Naive thymus-derived CD4-positive, alpha-beta T cell (primary cell): ENCODE measurements at regions of chr10 and their contacts with region 1.

Region 1: GRCh38 chr10:103192451-103193106 is 493 bp downstream of the NT5C2 start:
- DNase-seq: peak; percentile 36 to 76 (median 63)
- ATAC-seq: peak; percentile 60
- H3K4me3 ChIP-seq: peak overlapping the region; percentile 85
- H3K4me3 Mint-ChIP-seq: peak overlapping the region; percentile 91 to 100 (median 98)
- H3K27ac ChIP-seq: peak overlapping the region; percentile 97
- H3K27ac Mint-ChIP-seq: peak overlapping the region; percentile 81 to 100 (median 95)
- H3K4me1 ChIP-seq: peaks cover 6 to 21% of the 10 kb centered on the region in 2 donors
- H3K4me1 Mint-ChIP-seq: peaks cover 36 to 48% (median 44%) of the 10 kb centered on the region in 7 donors
- H3K27me3 ChIP-seq: no peaks in the 10 kb centered on the region
- H3K27me3 Mint-ChIP-seq: no peaks in the 10 kb centered on the region

Region 2: GRCh38 chr10:102743588-102744373 is 448.8 kb before region 1 on chr10 and contains the start of gene WBP1L:
- CTCF ChIA-PET with region 1: no interaction called
- POLR2A ChIA-PET with region 1: no interaction called
- intact Hi-C with region 1: loop called in 1 of 2 experiments (anchors 2 kb)
- DNase-seq: peak; percentile 77 to 98 (median 96)
- ATAC-seq: peak; percentile 98
- H3K4me3 ChIP-seq: peak within 1 kb of the TSS; percentile 85
- H3K4me3 Mint-ChIP-seq: peak within 1 kb of the TSS; percentile 80 to 97 (median 93)
- H3K27ac ChIP-seq: peak within 1 kb of the TSS; percentile 77
- H3K27ac Mint-ChIP-seq: peak within 1 kb of the TSS; percentile 57 to 96 (median 90)
- H3K4me1 ChIP-seq: peaks cover 17 to 25% of the 10 kb centered on the region in 2 donors
- H3K4me1 Mint-ChIP-seq: peaks cover 33 to 59% (median 48%) of the 10 kb centered on the region in 7 donors
- H3K27me3 ChIP-seq: no peaks in the 10 kb centered on the region
- H3K27me3 Mint-ChIP-seq: no peaks in the 10 kb centered on the region
- total RNA-seq, gene WBP1L: 20.5 to 37.9 (median 34.1) TPM

Region 3: GRCh38 chr10:103053659-103054581 is 138.7 kb before region 1 on chr10:
- CTCF ChIA-PET with region 1: no interaction called
- POLR2A ChIA-PET with region 1: no interaction called
- intact Hi-C with region 1: loop called in 1 of 2 experiments (anchors 1 kb)
- DNase-seq: peak in 8 of 9 donors; percentile 42 to 74 (median 58)
- ATAC-seq: peak; percentile 93
- H3K4me3 ChIP-seq: peak overlapping the region; percentile 37
- H3K4me3 Mint-ChIP-seq: peak overlapping the region; percentile 74 to 88 (median 84)
- H3K27ac ChIP-seq: peak overlapping the region; percentile 46
- H3K27ac Mint-ChIP-seq: peak overlapping the region; percentile 85 to 96 (median 90)
- H3K4me1 ChIP-seq: peaks cover 6 to 15% of the 10 kb centered on the region in 2 donors
- H3K4me1 Mint-ChIP-seq: peaks cover 13 to 21% (median 18%) of the 10 kb centered on the region in 7 donors
- H3K27me3 ChIP-seq: no peaks in the 10 kb centered on the region
- H3K27me3 Mint-ChIP-seq: no peaks in the 10 kb centered on the region

Region 4: DNA sequence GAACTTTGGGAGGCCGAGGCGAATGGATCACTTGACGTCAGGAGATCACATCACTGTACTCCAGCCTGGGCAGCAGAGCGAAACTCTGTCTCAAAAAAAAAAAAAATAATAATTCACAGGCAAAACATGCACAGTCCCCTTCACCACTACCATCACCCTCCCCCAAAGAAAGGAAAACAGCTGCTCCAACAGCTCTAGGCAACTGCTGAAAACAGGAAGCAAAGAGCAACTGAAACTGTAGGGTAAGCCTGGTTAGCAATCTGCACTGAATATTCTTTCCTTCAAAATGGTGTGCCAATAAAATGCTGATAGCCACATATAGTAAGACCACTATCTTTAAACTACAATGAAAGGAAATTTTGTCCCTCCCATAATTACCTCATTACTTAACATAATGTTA is 11.3 kb before region 1 on chr10:
- CTCF ChIA-PET with region 1: no interaction called
- POLR2A ChIA-PET with region 1: interaction called, 14 read pairs
- intact Hi-C with region 1: no loop called
- DNase-seq: peak in 3 of 9 donors; percentile 11 to 19 (median 14)
- ATAC-seq: peak; percentile 64
- H3K4me3 ChIP-seq: no peak overlapping the region
- H3K4me3 Mint-ChIP-seq: peak overlapping the region in 4 of 10 donors; percentile 7 to 43 (median 23)
- H3K27ac ChIP-seq: no peak overlapping the region
- H3K27ac Mint-ChIP-seq: peak overlapping the region in 6 of 9 donors; percentile 30 to 72 (median 54)
- H3K4me1 ChIP-seq: peaks cover 0 to 17% of the 10 kb centered on the region in 2 donors
- H3K4me1 Mint-ChIP-seq: peaks cover 42 to 70% (median 56%) of the 10 kb centered on the region in 7 donors
- H3K27me3 ChIP-seq: no peaks in the 10 kb centered on the region
- H3K27me3 Mint-ChIP-seq: no peaks in the 10 kb centered on the region

Region 5: GRCh38 chr10:103244663-103245271 is 52.2 kb after region 1 on chr10:
- CTCF ChIA-PET with region 1: no interaction called
- POLR2A ChIA-PET with region 1: no interaction called
- intact Hi-C with region 1: loop called (anchors 1 to 2 kb)
- DNase-seq: peak; percentile 31 to 67 (median 52)
- ATAC-seq: peak; percentile 79
- H3K4me3 ChIP-seq: no peak overlapping the region
- H3K4me3 Mint-ChIP-seq: no peak overlapping the region
- H3K27ac ChIP-seq: no peak overlapping the region
- H3K27ac Mint-ChIP-seq: no peak overlapping the region
- H3K4me1 ChIP-seq: no peaks in the 10 kb centered on the region
- H3K4me1 Mint-ChIP-seq: peaks cover 3 to 28% (median 6%) of the 10 kb centered on the region in 7 donors
- H3K27me3 ChIP-seq: no peaks in the 10 kb centered on the region
- H3K27me3 Mint-ChIP-seq: peaks cover 0 to 13% (median 7%) of the 10 kb centered on the region in 5 donors

Region 6: DNA sequence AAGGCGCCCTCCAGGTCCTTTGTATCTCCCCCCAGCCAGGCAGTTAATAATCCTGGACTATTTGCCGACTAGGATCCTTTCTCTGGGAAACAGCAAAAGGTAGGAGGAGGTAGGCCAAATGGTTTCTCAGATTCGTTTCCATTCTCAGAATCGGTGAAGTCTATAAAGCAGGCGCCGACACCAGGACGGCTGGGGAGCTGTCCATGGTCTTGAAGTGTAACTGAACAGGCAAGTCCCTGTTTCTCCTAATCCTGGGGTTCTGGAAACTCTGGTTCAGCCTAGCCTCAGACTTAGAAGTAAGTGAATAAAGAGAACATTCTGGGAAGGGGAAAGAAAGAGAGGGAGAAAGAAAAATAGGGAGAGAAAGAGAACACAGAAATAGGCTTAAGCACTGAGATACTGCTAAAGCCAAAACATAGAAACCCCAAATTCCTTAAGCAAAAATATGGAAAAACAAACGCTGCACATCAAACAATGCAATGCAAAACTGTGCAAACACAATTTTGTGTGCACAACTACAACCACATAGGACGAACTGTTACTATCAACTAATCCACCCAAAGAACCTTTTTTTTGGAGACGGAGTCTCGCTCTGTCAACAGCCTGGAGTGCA is 73.2 kb after region 1 on chr10:
- CTCF ChIA-PET with region 1: no interaction called
- POLR2A ChIA-PET with region 1: no interaction called
- intact Hi-C with region 1: no loop called
- DNase-seq: peak in 6 of 9 donors; percentile 16 to 40 (median 28)
- ATAC-seq: no peak
- H3K4me3 ChIP-seq: no peak overlapping the region
- H3K4me3 Mint-ChIP-seq: no peak overlapping the region
- H3K27ac ChIP-seq: no peak overlapping the region
- H3K27ac Mint-ChIP-seq: no peak overlapping the region
- H3K4me1 ChIP-seq: no peaks in the 10 kb centered on the region
- H3K4me1 Mint-ChIP-seq: no peaks in the 10 kb centered on the region
- H3K27me3 ChIP-seq: no peaks in the 10 kb centered on the region
- H3K27me3 Mint-ChIP-seq: peaks cover 23 to 70% (median 45%) of the 10 kb centered on the region in 5 donors